Activated CD8-positive, alpha-beta T cell treated with anti-CD3 and anti-CD28 coated beads, Interleukin-2, amount 10 ng/mL, durations not matched to agents 7 days and 5 days (primary cell): ENCODE measurements at regions of chr17 and their contacts with region 1.

Region 1: DNA sequence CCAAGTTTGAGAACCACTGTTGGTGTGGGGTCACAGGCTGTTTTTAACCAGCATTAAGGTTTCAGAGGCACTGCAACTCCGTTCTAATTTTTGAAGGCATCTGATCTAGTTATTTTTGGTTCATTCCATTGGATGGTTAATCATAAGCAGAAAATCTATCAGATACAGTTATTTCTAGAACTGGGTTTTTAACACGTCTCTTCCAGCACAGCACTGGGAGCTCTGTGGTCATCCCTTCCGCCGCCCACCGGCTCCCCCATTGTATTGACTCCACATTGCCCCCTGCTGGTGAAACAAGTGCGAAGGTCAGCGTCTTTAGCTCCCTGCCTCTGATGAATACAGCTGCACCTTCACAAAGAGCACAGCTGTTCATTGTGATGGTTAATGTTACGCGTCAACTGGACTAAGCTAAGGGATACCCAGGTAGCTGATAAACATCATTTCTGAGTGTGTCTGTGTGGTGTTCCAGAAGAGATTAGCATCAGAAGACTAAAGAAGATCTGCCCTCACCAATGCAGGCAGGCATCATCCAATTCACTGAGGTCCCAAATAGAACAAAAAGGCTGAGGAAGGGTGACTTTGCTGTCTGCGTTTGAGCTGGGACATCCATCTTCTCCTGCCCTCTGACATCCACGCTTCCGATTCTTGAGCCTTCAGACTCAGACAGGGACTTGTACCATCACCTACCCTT is 8.5 kb downstream of the CCL18 start:
- DNase-seq: peak; percentile 80
- ATAC-seq: peak; percentile 85
- H3K4me3 Mint-ChIP-seq: no peak overlapping the region
- H3K27ac Mint-ChIP-seq: no peak overlapping the region
- H3K4me1 Mint-ChIP-seq: peaks cover 25% of the 10 kb centered on the region
- H3K27me3 Mint-ChIP-seq: peaks cover 9% of the 10 kb centered on the region

Region 2: DNA sequence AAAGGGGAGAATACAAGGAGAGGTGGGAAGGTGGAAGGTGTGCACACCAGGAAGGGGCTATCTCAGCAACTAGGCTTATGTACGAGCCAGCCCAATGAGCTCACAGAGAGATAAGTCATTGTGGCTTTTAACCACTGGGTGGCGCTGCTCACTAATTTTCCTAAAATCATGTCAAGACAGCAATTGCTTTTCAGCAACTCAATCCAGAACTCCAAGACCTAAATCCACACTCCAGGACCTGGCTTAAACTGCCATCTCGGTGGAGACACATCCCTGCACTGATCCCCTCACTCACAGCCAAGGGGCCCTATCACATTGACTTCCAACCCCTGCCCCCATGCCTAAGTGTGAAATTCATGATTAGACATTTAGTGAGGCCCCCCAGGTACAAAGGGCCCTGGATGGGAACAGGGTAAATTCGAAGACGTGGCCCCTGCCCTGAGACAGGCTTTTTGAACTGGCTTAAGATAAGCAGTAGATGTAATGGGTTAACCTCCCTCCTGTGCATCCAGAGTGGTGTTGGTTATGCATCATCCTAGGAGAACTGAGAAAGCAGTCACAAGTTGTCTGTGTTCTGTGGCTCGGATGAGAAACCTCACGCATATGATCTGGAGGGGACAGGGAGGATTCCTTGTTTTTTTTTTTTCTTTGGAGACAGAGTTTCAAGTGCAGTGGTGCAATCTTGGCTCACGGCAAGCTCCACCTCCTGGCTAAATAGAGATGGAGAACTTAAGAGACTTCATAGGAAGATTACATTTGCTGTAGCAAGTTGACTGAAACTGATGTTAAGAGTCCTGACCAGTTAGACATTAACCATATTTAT is 102.8 kb before region 1 on chr17:
- CTCF ChIA-PET with region 1: interaction called, 45 read pairs
- POLR2A ChIA-PET with region 1: no interaction called
- DNase-seq: peak; percentile 86
- ATAC-seq: peak; percentile 72
- H3K4me3 Mint-ChIP-seq: no peak overlapping the region
- H3K27ac Mint-ChIP-seq: no peak overlapping the region
- H3K4me1 Mint-ChIP-seq: peaks cover 7% of the 10 kb centered on the region
- H3K27me3 Mint-ChIP-seq: peaks cover 6% of the 10 kb centered on the region

Region 3: DNA sequence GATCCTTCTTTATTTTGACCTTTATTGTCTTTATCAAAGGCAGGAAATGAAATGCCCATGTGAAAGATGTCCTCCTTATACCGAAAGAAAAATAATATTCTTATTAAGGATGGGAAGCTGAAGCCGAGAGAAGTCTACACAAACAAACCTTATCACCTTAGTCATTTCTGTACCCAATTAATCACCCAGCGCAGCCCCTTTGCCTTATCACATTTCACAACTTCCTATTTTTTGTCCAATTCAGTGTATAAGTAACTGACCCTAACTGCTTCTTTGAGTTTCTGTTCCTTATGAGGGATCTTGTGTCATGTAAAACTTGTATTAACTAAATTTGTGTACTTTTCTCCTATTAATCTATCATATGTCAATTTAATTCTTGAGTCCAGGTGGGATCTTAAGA is 38.4 kb before region 1 on chr17:
- CTCF ChIA-PET with region 1: no interaction called
- POLR2A ChIA-PET with region 1: no interaction called
- DNase-seq: no peak
- ATAC-seq: no peak
- H3K4me3 Mint-ChIP-seq: no peak overlapping the region
- H3K27ac Mint-ChIP-seq: no peak overlapping the region
- H3K4me1 Mint-ChIP-seq: no peaks in the 10 kb centered on the region
- H3K27me3 Mint-ChIP-seq: peaks cover 41% of the 10 kb centered on the region

Region 4: GRCh38 chr17:36048066-36048465 is 24.5 kb before region 1 on chr17:
- CTCF ChIA-PET with region 1: interaction called, 10 read pairs
- POLR2A ChIA-PET with region 1: no interaction called
- DNase-seq: no peak
- ATAC-seq: no peak
- H3K4me3 Mint-ChIP-seq: no peak overlapping the region
- H3K27ac Mint-ChIP-seq: no peak overlapping the region
- H3K4me1 Mint-ChIP-seq: no peaks in the 10 kb centered on the region
- H3K27me3 Mint-ChIP-seq: peaks cover 24% of the 10 kb centered on the region

Region 5: DNA sequence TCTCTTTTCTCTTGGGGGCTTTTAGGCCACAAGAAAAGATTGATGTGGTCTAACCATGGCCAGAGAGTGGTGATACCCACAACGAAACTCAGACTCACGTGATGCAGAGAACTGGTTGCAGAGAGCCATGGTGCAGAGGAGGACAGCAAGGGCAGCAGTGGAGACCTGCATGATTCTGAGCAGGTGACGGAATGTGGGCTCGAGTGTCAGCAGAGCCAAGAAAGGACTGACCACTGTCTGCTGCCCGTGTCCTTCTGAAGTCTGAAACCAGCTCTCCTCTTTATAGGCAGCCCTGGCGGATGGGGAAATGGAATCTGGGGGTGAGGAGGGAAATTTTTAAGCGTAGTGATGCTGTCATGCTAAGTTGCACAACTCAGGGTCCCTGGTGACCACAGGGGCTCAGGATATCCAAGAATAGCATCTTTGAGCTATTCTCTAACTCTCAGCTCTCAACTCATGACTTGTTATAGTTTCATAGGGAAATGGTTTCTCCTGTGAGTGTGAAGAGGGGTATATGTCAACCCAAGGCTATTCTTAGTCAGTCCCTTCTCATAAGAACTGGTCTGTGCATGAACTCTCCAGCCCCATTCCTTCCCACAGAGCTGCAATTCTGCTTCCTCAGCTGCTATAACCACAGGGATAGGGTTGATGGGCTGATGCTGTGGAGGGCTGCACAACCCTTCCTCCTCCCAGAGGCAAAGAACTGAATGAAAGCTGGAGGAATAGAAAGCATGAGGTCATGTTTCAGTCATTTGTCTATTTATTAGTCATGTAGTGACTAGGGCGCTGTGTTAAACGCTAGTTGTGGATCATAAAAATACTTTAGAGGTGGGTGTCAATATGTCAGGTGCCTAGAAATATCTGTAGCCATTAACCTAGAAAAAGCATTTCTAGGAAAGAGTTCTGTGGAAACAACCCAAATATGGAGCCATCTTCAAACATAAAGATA is 17.6 kb after region 1 on chr17 and contains the start of gene CCL3:
- CTCF ChIA-PET with region 1: interaction called, 38 read pairs
- POLR2A ChIA-PET with region 1: interaction called, 11 read pairs
- DNase-seq: peak; percentile 50
- ATAC-seq: peak; percentile 59
- H3K4me3 Mint-ChIP-seq: peak within 1 kb of the TSS; percentile 55
- H3K27ac Mint-ChIP-seq: peak within 1 kb of the TSS; percentile 82
- H3K4me1 Mint-ChIP-seq: peaks cover 55% of the 10 kb centered on the region
- H3K27me3 Mint-ChIP-seq: peaks cover 31% of the 10 kb centered on the region
- total RNA-seq, gene CCL3: 4.2 to 5.1 TPM

Region 6: GRCh38 chr17:36148559-36149295 is 76.2 kb after region 1 on chr17:
- CTCF ChIA-PET with region 1: interaction called, 105 read pairs
- POLR2A ChIA-PET with region 1: interaction called, 3 read pairs
- DNase-seq: peak; percentile 76
- ATAC-seq: peak; percentile 95
- H3K4me3 Mint-ChIP-seq: no peak overlapping the region
- H3K27ac Mint-ChIP-seq: no peak overlapping the region
- H3K4me1 Mint-ChIP-seq: peaks cover 8% of the 10 kb centered on the region
- H3K27me3 Mint-ChIP-seq: peaks cover 32% of the 10 kb centered on the region

Region 7: GRCh38 chr17:36212966-36213365 is 140.4 kb after region 1 on chr17:
- CTCF ChIA-PET with region 1: no interaction called
- POLR2A ChIA-PET with region 1: no interaction called
- DNase-seq: no peak
- ATAC-seq: no peak
- H3K4me3 Mint-ChIP-seq: no peak overlapping the region
- H3K27ac Mint-ChIP-seq: no peak overlapping the region
- H3K4me1 Mint-ChIP-seq: peaks cover 25% of the 10 kb centered on the region
- H3K27me3 Mint-ChIP-seq: peaks cover 23% of the 10 kb centered on the region